CD4-positive, alpha-beta memory T cell (primary cell): ENCODE measurements at regions of chr14 and their contacts with region 1.

Region 1: DNA sequence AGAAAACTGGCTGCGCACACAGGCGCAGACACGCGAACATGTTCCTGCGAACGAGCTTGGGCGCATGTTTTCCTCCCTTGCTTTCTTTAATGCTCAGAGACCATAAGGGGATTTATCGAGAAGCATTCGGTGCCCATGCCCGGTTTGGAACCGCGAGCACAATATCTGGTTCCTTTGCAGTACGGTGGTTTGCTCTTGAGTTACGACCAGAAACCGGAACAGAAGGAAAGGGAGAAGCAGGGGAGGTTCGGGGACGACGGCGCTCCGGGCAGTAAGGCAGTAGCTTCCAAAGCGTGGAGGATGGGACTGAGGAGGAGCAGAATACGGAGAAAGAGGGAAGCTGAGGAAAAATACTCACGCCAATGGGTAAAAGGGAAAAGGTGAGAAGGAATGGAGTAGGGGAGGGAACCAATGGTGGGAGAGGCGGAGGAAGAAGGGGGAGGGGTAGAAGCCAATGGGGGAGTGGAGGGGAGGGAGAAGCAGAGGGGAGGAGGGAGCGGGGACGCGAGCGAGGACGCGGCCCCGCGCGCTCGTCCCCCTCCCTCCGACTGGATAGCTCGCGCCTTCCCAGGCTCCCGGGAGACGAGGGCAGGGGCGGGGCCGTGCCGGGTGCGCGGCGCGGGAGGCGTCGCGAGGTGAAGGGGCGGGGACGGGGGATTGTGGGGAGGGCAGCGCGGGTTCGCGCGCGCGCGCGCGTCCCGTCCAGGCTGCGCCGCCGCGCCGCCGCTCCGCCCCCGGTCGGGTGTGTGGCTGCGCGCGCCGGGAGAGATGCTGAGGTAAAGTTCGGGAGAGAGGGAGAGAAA is 625 bp upstream of the ARHGAP5 start:
- DNase-seq: peak; percentile 76 to 84 (median 80)
- H3K4me3 ChIP-seq: peak overlapping the region; percentile 71 to 73
- H3K4me3 Mint-ChIP-seq: peak overlapping the region; percentile 92 to 100 (median 96)
- H3K27ac ChIP-seq: peak overlapping the region; percentile 74
- H3K27ac Mint-ChIP-seq: peak overlapping the region; percentile 92 to 98 (median 96)
- H3K4me1 ChIP-seq: peaks cover 38% of the 10 kb centered on the region
- H3K4me1 Mint-ChIP-seq: peaks cover 22 to 48% (median 35%) of the 10 kb centered on the region in 4 donors
- H3K27me3 ChIP-seq: no peaks in the 10 kb centered on the region
- H3K27me3 Mint-ChIP-seq: peaks cover 0 to 2% of the 10 kb centered on the region in 2 donors

Region 2: DNA sequence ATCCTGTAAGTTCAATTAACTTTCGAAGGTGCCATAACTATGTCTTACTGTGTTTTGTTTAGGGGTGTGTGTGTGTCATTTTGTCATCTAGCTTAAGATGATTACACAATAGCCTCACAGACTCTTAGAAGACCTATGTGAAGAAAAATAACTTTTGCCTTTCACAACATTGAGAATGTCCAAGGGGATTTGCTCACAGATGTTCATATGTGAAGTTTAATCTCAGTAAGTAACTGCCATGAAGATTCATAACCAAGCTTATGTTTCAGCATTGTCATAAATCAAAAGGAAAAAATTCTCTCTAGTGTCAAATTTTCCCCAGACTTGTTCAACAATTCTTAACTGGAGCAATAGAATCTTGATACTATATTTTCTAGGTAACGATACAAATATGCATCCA is 1922.8 kb before region 1 on chr14:
- CTCF ChIA-PET with region 1: no interaction called
- POLR2A ChIA-PET with region 1: no interaction called
- intact Hi-C with region 1: no loop called
- DNase-seq: no peak
- H3K4me3 ChIP-seq: no peak overlapping the region
- H3K4me3 Mint-ChIP-seq: no peak overlapping the region
- H3K27ac ChIP-seq: no peak overlapping the region
- H3K27ac Mint-ChIP-seq: no peak overlapping the region
- H3K4me1 ChIP-seq: no peaks in the 10 kb centered on the region
- H3K4me1 Mint-ChIP-seq: no peaks in the 10 kb centered on the region
- H3K27me3 ChIP-seq: no peaks in the 10 kb centered on the region
- H3K27me3 Mint-ChIP-seq: no peaks in the 10 kb centered on the region

Region 3: GRCh38 chr14:30558675-30559555 is 1517.6 kb before region 1 on chr14 and contains the start of gene G2E3:
- CTCF ChIA-PET with region 1: no interaction called
- POLR2A ChIA-PET with region 1: no interaction called
- intact Hi-C with region 1: loop called (anchors 5 kb)
- DNase-seq: peak; percentile 83 to 85 (median 84)
- H3K4me3 ChIP-seq: peak within 1 kb of the TSS; percentile 93 to 97
- H3K4me3 Mint-ChIP-seq: peak within 1 kb of the TSS; percentile 99 to 100 (median 100)
- H3K27ac ChIP-seq: peak within 1 kb of the TSS; percentile 82
- H3K27ac Mint-ChIP-seq: peak within 1 kb of the TSS; percentile 91 to 99 (median 99)
- H3K4me1 ChIP-seq: peaks cover 28% of the 10 kb centered on the region
- H3K4me1 Mint-ChIP-seq: peaks cover 24 to 49% (median 32%) of the 10 kb centered on the region in 4 donors
- H3K27me3 ChIP-seq: no peaks in the 10 kb centered on the region
- H3K27me3 Mint-ChIP-seq: no peaks in the 10 kb centered on the region
- total RNA-seq, gene G2E3: 26.4 to 32.0 TPM

Region 4: GRCh38 chr14:31207755-31208545 is 868.5 kb before region 1 on chr14 and contains the start of gene HECTD1:
- CTCF ChIA-PET with region 1: no interaction called
- POLR2A ChIA-PET with region 1: interaction called, 9 read pairs
- intact Hi-C with region 1: loop called (anchors 5 kb)
- DNase-seq: peak; percentile 91 to 94 (median 92)
- H3K4me3 ChIP-seq: peak within 1 kb of the TSS; percentile 76 to 79
- H3K4me3 Mint-ChIP-seq: peak within 1 kb of the TSS; percentile 91 to 98 (median 95)
- H3K27ac ChIP-seq: peak within 1 kb of the TSS; percentile 97
- H3K27ac Mint-ChIP-seq: peak within 1 kb of the TSS; percentile 99 to 100 (median 99)
- H3K4me1 ChIP-seq: peaks cover 46% of the 10 kb centered on the region
- H3K4me1 Mint-ChIP-seq: peaks cover 43 to 77% (median 55%) of the 10 kb centered on the region in 4 donors
- H3K27me3 ChIP-seq: no peaks in the 10 kb centered on the region
- H3K27me3 Mint-ChIP-seq: no peaks in the 10 kb centered on the region
- total RNA-seq, gene HECTD1: 157 to 170 TPM

Region 5: GRCh38 chr14:31510222-31510621 is 566.3 kb before region 1 on chr14:
- CTCF ChIA-PET with region 1: no interaction called
- POLR2A ChIA-PET with region 1: no interaction called
- intact Hi-C with region 1: loop called (anchors 1 kb)
- DNase-seq: peak in 4 of 5 donors; percentile 16 to 24 (median 22)
- H3K4me3 ChIP-seq: no peak overlapping the region
- H3K4me3 Mint-ChIP-seq: no peak overlapping the region
- H3K27ac ChIP-seq: no peak overlapping the region
- H3K27ac Mint-ChIP-seq: no peak overlapping the region
- H3K4me1 ChIP-seq: no peaks in the 10 kb centered on the region
- H3K4me1 Mint-ChIP-seq: no peaks in the 10 kb centered on the region
- H3K27me3 ChIP-seq: no peaks in the 10 kb centered on the region
- H3K27me3 Mint-ChIP-seq: peaks cover 0 to 6% of the 10 kb centered on the region in 2 donors

Region 6: GRCh38 chr14:31937721-31938346 is 138.6 kb before region 1 on chr14:
- CTCF ChIA-PET with region 1: interaction called, 7 read pairs
- POLR2A ChIA-PET with region 1: interaction called, 14 read pairs
- intact Hi-C with region 1: loop called (anchors 2 kb)
- DNase-seq: peak; percentile 12 to 78 (median 20)
- H3K4me3 ChIP-seq: no peak overlapping the region
- H3K4me3 Mint-ChIP-seq: peak overlapping the region in 1 of 8 donors; percentile 2
- H3K27ac ChIP-seq: no peak overlapping the region
- H3K27ac Mint-ChIP-seq: peak overlapping the region; percentile 57 to 91 (median 80)
- H3K4me1 ChIP-seq: peaks cover 9% of the 10 kb centered on the region
- H3K4me1 Mint-ChIP-seq: peaks cover 11 to 17% (median 16%) of the 10 kb centered on the region in 4 donors
- H3K27me3 ChIP-seq: no peaks in the 10 kb centered on the region
- H3K27me3 Mint-ChIP-seq: no peaks in the 10 kb centered on the region

Region 7: DNA sequence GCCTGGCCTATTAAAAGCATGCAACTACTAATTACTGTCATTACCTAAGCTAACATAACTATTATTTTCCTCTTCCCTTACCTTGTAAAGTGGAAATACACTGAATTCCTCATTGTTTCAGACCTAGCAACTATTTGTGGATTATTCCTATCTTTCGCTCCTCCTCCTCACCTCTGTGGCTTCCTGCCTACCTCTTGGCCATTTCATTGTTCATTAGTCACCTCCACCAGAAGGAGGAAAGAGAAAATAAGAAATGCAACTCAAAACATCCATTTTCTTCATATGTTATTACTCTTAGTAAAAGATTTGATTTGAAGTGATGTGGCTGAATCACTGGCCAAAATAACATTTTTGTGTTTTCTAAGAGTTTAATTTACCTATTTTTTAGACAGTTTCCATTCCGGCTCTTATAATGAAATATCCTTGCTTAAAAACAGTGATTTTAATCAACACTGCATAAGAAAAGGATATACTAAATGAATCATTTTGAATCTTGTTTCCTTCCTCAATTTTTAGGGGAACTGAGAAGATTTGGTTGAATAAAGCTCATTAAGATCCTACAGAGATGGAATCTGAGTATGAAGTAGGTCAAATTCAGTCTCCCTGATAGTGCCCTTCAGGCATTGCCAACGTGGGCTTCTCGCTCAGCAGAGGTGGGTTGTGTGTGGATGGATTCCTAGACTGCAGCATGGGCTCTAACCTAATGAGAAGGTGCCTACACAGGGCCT is 27.0 kb before region 1 on chr14:
- CTCF ChIA-PET with region 1: no interaction called
- POLR2A ChIA-PET with region 1: no interaction called
- intact Hi-C with region 1: no loop called
- DNase-seq: no peak
- H3K4me3 ChIP-seq: no peak overlapping the region
- H3K4me3 Mint-ChIP-seq: no peak overlapping the region
- H3K27ac ChIP-seq: no peak overlapping the region
- H3K27ac Mint-ChIP-seq: no peak overlapping the region
- H3K4me1 ChIP-seq: no peaks in the 10 kb centered on the region
- H3K4me1 Mint-ChIP-seq: no peaks in the 10 kb centered on the region
- H3K27me3 ChIP-seq: no peaks in the 10 kb centered on the region
- H3K27me3 Mint-ChIP-seq: no peaks in the 10 kb centered on the region

Region 8: GRCh38 chr14:32109676-32110547 is 33.4 kb after region 1 on chr14:
- CTCF ChIA-PET with region 1: interaction called, 5 read pairs
- POLR2A ChIA-PET with region 1: interaction called, 3 read pairs
- intact Hi-C with region 1: loop called (anchors 5 kb)
- DNase-seq: no peak
- H3K4me3 ChIP-seq: no peak overlapping the region
- H3K4me3 Mint-ChIP-seq: peak overlapping the region in 1 of 8 donors; percentile 63
- H3K27ac ChIP-seq: no peak overlapping the region
- H3K27ac Mint-ChIP-seq: peak overlapping the region in 2 of 7 donors; percentile 43 to 48
- H3K4me1 ChIP-seq: peaks cover 15% of the 10 kb centered on the region
- H3K4me1 Mint-ChIP-seq: peaks cover 22 to 35% (median 25%) of the 10 kb centered on the region in 4 donors
- H3K27me3 ChIP-seq: no peaks in the 10 kb centered on the region
- H3K27me3 Mint-ChIP-seq: no peaks in the 10 kb centered on the region

Region 9: DNA sequence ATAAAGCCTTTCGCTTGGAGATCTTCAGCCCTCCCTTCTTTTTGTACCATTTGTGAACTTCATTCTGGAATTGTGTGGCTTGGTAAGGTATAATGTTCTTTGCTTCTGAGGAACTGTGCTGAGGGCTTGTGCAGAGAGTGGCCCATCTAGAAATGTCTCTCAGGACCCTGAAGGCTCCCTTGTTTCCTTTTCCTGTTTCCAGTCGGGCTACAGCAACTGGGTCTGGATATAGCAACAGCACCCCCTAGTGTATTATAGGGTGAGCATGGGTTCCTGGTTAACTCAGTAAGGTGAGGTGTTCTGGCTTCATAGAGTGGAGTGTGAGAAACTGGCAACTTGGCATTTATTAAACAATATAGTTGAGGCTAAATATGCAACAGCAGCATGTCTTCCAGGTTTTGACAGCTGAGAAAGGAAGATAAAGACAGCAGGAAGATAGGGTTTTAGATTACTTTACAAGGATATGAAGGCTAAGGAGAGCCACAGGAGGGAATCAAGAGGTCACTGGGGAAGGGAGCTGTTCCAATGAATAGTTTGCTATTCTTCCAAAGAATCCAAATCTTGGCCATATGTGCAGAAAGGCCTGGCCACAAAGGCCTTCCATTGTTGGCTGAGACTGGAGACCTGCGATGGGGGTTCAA is 175.7 kb after region 1 on chr14:
- CTCF ChIA-PET with region 1: interaction called, 347 read pairs
- POLR2A ChIA-PET with region 1: interaction called, 10 read pairs
- intact Hi-C with region 1: loop called (anchors 1 kb)
- DNase-seq: peak; percentile 65 to 70 (median 69)
- H3K4me3 ChIP-seq: no peak overlapping the region
- H3K4me3 Mint-ChIP-seq: no peak overlapping the region
- H3K27ac ChIP-seq: no peak overlapping the region
- H3K27ac Mint-ChIP-seq: no peak overlapping the region
- H3K4me1 ChIP-seq: peaks cover 3% of the 10 kb centered on the region
- H3K4me1 Mint-ChIP-seq: no peaks in the 10 kb centered on the region
- H3K27me3 ChIP-seq: no peaks in the 10 kb centered on the region
- H3K27me3 Mint-ChIP-seq: no peaks in the 10 kb centered on the region

Region 10: GRCh38 chr14:33323979-33324378 is 1247.5 kb after region 1 on chr14:
- CTCF ChIA-PET with region 1: no interaction called
- POLR2A ChIA-PET with region 1: no interaction called
- intact Hi-C with region 1: no loop called
- DNase-seq: no peak
- H3K4me3 ChIP-seq: no peak overlapping the region
- H3K4me3 Mint-ChIP-seq: no peak overlapping the region
- H3K27ac ChIP-seq: no peak overlapping the region
- H3K27ac Mint-ChIP-seq: no peak overlapping the region
- H3K4me1 ChIP-seq: no peaks in the 10 kb centered on the region
- H3K4me1 Mint-ChIP-seq: no peaks in the 10 kb centered on the region
- H3K27me3 ChIP-seq: no peaks in the 10 kb centered on the region
- H3K27me3 Mint-ChIP-seq: no peaks in the 10 kb centered on the region